Mammary epithelial cell (primary cell): ENCODE measurements at regions of chr1 and their contacts with region 1.

Region 1: DNA sequence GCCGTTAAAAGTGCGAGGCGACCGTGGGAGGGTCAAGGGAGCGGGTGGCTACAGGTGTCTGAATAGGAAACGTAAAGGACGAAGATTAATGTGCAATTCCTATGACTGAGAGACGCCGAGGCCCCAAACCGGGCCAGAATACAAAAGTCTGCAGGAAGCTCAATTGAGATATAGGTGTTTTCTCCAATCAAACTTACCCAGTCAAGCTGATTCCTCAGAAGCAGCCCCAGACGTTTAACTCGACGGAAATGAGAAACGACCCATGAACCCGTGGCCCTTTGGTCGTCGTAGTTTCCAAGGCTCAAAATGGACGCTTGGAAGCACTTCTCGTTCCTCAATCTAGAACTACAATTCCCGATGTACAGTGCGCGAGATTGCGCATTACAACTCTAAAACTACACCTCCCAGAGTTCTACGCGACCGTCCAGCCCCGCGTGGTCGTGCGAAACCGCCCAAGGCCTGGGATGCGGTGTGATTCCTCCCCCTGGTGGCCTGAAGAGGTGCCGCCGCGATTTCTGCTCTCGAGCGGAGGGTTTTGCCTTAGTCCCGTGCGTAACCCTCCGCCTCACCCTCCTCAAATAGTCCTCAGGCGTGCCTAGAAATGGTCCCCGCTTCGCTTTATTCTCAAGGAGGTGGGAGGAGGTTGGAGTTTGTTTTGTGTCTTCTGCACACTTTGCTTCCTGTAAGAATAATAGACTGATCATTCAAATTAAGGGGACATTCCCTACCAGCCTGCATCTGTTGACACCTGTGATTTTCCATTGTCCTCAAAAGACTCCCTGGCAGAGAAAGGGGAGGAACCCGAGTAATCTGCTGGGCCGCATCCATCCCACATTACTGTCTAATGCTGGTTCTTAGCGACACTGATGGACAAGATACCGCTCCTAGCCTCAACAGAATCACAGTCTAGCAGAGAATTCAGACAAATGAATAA is at the start of gene PAFAH2:
- DNase-seq: peak; percentile 99
- H3K4me3 ChIP-seq: peak within 1 kb of the TSS; percentile 63 to 64 (median 63)
- H3K27ac ChIP-seq: peak within 1 kb of the TSS; percentile 53
- H3K4me1 ChIP-seq: peaks cover 6% of the 10 kb centered on the region
- H3K27me3 ChIP-seq: no peaks in the 10 kb centered on the region
- CTCF ChIP-seq: peak; percentile 97 to 99
- total RNA-seq, gene PAFAH2: 15.1 to 17.2 TPM

Region 2: GRCh38 chr1:25819576-25820246 is 178.4 kb before region 1 on chr1 and contains the start of gene MTFR1L:
- CTCF ChIA-PET with region 1: no interaction called
- dilution Hi-C with region 1: no loop called
- in situ Hi-C with region 1: loop called in 1 of 2 experiments (anchors 10 kb)
- intact Hi-C with region 1: loop called (anchors 1 kb)
- DNase-seq: peak; percentile 90
- H3K4me3 ChIP-seq: peak within 1 kb of the TSS; percentile 72 to 90 (median 88)
- H3K27ac ChIP-seq: peak within 1 kb of the TSS; percentile 73
- H3K4me1 ChIP-seq: peaks cover 23% of the 10 kb centered on the region
- H3K27me3 ChIP-seq: no peaks in the 10 kb centered on the region
- CTCF ChIP-seq: no peak
- total RNA-seq, gene MTFR1L: 31.2 to 39.0 TPM

Region 3: DNA sequence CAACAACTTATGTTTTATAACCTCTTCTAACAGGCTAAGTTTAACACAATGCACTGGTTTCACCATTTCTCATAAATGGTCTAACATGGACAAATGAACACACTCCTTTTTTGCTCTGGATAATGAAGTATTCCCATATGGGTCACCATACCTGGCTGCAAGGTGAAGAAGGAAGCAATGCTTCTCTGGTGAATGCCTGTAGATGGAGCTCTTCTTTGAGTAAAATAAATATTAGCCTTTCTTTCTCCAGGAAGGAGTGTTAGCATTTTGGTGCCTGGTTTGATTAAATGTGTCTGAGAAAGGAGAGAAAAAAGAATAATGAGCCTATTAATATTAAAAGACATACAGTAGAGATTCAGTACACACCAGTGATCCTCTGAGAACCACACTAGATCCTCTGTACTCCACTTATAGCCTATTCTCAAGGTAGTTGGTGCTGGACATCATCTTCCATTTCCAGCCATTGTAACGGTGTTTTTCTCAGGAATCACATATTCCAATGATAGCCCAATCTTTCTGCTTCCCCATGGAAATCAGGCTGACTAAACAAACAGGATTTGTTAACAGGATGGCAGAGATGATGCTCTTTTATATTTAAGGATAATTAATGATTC is 160.7 kb before region 1 on chr1:
- CTCF ChIA-PET with region 1: interaction called, 4 read pairs
- dilution Hi-C with region 1: no loop called
- in situ Hi-C with region 1: loop called in 1 of 2 experiments (anchors 5 kb)
- intact Hi-C with region 1: loop called (anchors 1 kb)
- DNase-seq: peak; percentile 22
- H3K4me3 ChIP-seq: no peak overlapping the region
- H3K27ac ChIP-seq: no peak overlapping the region
- H3K4me1 ChIP-seq: no peaks in the 10 kb centered on the region
- H3K27me3 ChIP-seq: no peaks in the 10 kb centered on the region
- CTCF ChIP-seq: peak; percentile 59 to 66

Region 4: DNA sequence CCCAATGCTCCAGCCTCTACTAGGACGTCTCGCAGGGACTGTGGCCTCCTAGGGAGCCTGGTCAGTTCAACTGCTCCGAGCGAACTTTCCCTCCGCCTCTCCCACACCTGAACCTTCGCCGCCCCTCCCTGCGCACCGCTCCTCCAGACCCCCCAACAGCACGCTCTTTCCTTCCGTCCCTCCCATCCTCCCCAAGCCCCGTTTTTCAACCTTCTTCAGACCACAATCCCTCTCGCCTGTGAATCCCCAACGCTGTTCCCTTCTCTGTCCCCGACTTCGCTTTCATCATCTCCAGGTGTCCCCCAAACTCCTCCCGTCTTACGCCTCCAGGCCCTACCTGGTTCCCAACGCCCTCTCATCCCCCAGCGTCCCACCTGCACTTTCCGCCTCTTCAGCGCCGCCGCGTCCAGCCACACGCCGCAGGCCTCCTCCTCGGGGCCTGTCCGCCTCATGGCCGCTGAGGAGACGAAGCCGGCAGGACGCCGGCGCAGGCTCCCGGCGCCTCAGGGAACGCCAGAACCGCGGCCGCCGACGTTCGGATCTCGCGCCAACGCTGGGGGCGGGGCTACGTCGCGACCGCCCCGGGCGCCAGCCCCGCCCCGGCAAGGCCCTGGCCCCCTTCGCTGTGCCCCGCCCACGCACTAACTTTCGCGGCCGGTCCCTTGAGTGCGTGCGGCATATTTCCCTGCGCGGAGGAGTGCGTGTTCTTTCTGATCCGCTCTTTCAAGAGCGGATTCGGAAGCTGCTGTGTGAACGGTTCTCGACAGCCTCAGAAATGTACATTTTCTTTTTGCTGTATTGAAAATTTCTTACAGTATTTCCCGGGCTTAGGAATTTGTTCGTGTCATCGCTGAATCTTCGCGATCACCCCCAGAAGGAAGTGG is 138.9 kb before region 1 on chr1 and contains the start of gene AUNIP:
- CTCF ChIA-PET with region 1: no interaction called
- dilution Hi-C with region 1: no loop called
- in situ Hi-C with region 1: no loop called
- intact Hi-C with region 1: loop called (anchors 1 kb)
- DNase-seq: peak; percentile 89
- H3K4me3 ChIP-seq: peak within 1 kb of the TSS; percentile 37 to 93 (median 88)
- H3K27ac ChIP-seq: peak within 1 kb of the TSS; percentile 73
- H3K4me1 ChIP-seq: peaks cover 9% of the 10 kb centered on the region
- H3K27me3 ChIP-seq: no peaks in the 10 kb centered on the region
- CTCF ChIP-seq: no peak
- total RNA-seq, gene AUNIP: 5.7 to 9.3 TPM

Region 5: DNA sequence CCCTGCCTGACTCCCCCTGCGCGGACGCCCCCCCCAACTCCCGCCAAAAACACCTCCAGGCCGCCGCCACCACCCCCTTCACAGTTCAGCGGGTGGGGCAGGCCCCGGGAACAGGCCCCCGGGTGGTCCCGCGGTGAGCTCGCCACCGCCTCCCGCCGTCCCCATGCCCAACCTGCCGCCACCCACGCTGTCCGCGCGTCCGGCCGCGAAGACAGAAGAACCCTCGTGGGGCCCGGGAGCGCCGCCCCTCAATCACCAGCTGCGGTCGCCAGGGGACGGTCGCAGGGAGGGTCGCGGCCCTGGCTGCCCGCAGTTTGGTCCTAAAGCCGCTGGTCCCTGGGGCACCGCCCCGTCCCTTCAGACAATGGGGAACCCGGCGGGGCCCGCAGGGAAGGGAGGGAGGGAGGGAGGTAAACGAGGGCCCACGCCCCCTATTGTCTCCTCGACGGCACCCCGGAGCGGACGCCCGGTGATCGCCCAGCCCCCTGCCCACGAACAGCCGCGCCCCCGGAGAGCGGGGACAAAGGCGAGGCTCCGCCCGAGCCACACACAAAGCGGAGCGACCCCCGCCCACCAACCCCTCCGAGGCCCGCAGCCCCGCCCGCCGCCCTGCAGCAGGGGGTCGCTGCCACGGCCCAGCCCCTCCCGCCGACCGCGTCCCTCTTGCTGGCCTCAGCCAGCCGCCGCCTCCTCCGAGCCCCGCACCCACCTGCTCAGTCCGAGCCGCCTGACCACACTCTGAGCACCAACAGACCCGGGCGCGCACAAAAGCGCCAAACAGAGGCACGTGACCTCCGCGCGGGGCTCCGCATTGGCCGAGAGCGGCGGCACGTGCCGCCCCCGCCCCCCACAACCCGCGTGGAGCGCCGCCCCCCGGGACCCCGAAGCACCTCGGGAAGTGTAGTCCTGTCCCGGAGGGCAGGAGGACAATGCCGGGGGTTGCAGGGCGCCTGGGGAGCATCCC is 92.1 kb before region 1 on chr1 and contains the start of gene STMN1:
- CTCF ChIA-PET with region 1: interaction called, 3 read pairs
- dilution Hi-C with region 1: no loop called
- in situ Hi-C with region 1: loop called in 1 of 2 experiments (anchors 5 kb)
- intact Hi-C with region 1: loop called (anchors 2 kb)
- DNase-seq: peak; percentile 81
- H3K4me3 ChIP-seq: peak within 1 kb of the TSS; percentile 72 to 94 (median 89)
- H3K27ac ChIP-seq: peak within 1 kb of the TSS; percentile 87
- H3K4me1 ChIP-seq: peaks cover 16% of the 10 kb centered on the region
- H3K27me3 ChIP-seq: no peaks in the 10 kb centered on the region
- CTCF ChIP-seq: no peak
- total RNA-seq, gene STMN1: 42.5 to 202 TPM

Region 6: GRCh38 chr1:25927521-25928265 is 70.4 kb before region 1 on chr1:
- CTCF ChIA-PET with region 1: no interaction called
- dilution Hi-C with region 1: no loop called
- in situ Hi-C with region 1: no loop called
- intact Hi-C with region 1: no loop called
- DNase-seq: no peak
- H3K4me3 ChIP-seq: no peak overlapping the region
- H3K27ac ChIP-seq: no peak overlapping the region
- H3K4me1 ChIP-seq: peaks cover 8% of the 10 kb centered on the region
- H3K27me3 ChIP-seq: no peaks in the 10 kb centered on the region
- CTCF ChIP-seq: no peak

Region 7: DNA sequence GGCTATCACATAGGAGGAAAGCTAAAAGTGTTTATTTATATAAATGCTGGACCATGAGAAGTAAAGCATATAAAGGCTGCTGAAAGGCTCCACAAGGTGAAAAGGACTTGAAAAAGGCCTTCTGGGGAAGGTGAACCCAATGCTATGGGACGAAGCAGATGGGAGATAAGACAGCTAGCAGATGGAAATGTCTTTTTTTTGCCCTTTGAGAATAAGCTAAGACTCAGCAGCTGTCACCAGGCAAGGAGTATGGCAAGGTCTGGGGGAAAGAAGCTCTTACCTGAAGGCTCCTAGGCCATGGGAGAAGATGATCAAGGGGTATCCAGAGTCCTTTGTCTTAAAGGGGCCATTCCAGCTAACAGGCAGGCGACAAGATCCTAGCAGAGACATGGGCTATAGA is 10.1 kb before region 1 on chr1:
- CTCF ChIA-PET with region 1: no interaction called
- dilution Hi-C with region 1: no loop called
- in situ Hi-C with region 1: no loop called
- intact Hi-C with region 1: no loop called
- DNase-seq: no peak
- H3K4me3 ChIP-seq: no peak overlapping the region
- H3K27ac ChIP-seq: no peak overlapping the region
- H3K4me1 ChIP-seq: no peaks in the 10 kb centered on the region
- H3K27me3 ChIP-seq: no peaks in the 10 kb centered on the region
- CTCF ChIP-seq: no peak